Natural killer cell (primary cell): ENCODE measurements at regions of chr19 and their contacts with region 1.

Region 1: DNA sequence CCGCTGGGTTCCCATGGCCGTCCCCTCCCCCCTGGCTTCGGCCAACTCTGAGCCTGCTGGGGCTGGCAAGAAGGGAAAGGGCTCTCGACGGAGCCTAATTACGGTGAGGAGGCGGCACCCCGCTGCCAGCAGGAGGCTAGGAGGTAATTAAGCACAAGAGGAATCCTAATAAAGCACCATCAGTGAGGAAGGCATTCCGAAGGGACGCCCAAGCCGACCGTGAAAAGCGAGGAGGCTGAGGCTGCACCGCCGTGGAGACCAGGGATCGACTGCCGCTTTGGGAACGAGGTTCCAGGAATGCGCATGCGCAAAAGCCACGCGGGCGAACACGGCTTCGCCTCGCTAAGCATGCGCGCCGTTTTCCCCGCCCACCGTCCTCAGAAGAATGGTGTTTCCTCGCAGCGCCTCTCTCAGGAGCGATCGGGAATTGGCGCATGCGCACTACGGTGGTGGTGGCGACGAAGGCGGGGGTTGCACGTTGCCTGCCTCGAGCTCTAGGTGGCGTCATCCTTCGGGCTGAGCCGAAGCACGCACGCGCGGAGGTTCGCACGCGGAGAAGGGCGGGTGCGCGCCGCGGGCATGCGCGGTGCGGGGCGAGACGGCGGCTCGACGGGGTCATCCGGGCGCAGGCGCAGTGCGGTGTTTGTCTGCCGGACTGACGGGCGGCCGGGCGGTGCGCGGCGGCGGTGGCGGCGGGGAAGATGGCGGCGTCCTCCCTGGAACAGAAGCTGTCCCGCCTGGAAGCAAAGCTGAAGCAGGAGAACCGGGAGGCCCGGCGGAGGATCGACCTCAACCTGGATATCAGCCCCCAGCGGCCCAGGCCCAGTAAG is at the start of gene MAP2K7:
- DNase-seq: peak; percentile 100
- ATAC-seq: peak; percentile 71 to 87 (median 72)
- H3K4me3 ChIP-seq: peak within 1 kb of the TSS; percentile 62
- H3K4me3 Mint-ChIP-seq: peak within 1 kb of the TSS; percentile 93
- H3K27ac ChIP-seq: peak within 1 kb of the TSS; percentile 88
- H3K27ac Mint-ChIP-seq: peak within 1 kb of the TSS; percentile 95 to 99
- H3K4me1 ChIP-seq: peaks cover 32% of the 10 kb centered on the region
- H3K4me1 Mint-ChIP-seq: peaks cover 20 to 47% of the 10 kb centered on the region in 2 donors
- H3K27me3 ChIP-seq: no peaks in the 10 kb centered on the region
- H3K27me3 Mint-ChIP-seq: peaks cover 0 to 3% of the 10 kb centered on the region in 2 donors
- CTCF ChIP-seq: peak; percentile 57
- total RNA-seq, gene MAP2K7: 131 to 218 (median 159) TPM

Region 2: GRCh38 chr19:7919610-7920518 is 16.4 kb after region 1 on chr19 and contains the start of gene SNAPC2:
- intact Hi-C with region 1: loop called (anchors 1 kb)
- DNase-seq: peak; percentile 97 to 98
- ATAC-seq: peak; percentile 60 to 79 (median 62)
- H3K4me3 ChIP-seq: peak within 1 kb of the TSS; percentile 55
- H3K4me3 Mint-ChIP-seq: peak within 1 kb of the TSS; percentile 90
- H3K27ac ChIP-seq: peak within 1 kb of the TSS; percentile 72
- H3K27ac Mint-ChIP-seq: peak within 1 kb of the TSS; percentile 82 to 96
- H3K4me1 ChIP-seq: peaks cover 59% of the 10 kb centered on the region
- H3K4me1 Mint-ChIP-seq: peaks cover 21 to 37% of the 10 kb centered on the region in 2 donors
- H3K27me3 ChIP-seq: peaks cover 26% of the 10 kb centered on the region
- H3K27me3 Mint-ChIP-seq: peaks cover 0 to 22% of the 10 kb centered on the region in 2 donors
- CTCF ChIP-seq: no peak
- total RNA-seq, gene SNAPC2: 22.1 to 32.4 (median 27.1) TPM

Region 3: DNA sequence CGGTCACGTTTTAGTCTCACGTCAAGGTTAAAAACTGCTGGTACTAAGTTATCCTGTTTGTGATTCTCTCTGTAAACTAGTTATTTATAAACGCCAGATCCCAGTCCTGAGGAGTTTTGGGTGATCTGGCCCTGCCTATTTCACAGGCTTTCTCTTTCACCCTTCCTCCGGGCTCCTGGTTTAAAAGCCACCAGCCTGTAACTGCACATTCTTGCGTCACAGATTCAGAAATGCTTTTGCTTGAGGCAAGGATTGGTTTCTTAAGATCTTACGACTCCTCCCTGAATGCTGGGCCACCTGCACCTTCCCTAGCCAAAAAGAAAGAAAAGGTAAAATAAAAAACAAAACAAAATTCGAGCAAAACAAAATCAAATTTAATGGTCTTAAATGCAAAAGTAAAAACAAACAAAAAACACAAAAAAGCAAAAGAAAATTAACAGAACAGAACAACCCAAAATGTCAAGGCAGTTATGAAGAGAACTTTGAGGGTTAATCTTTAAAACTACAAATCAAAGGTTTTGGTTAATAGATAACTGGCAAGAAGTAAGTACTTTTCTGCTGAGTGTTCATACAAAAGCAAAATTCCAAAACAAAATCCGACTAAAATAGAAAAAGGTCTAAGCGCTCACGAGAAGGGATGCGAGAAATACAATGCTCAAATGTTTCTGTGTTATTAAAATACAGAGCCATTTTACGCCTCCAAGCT is 58.6 kb after region 1 on chr19:
- intact Hi-C with region 1: no loop called
- DNase-seq: no peak
- ATAC-seq: no peak
- H3K4me3 ChIP-seq: no peak overlapping the region
- H3K4me3 Mint-ChIP-seq: no peak overlapping the region
- H3K27ac ChIP-seq: no peak overlapping the region
- H3K27ac Mint-ChIP-seq: peak overlapping the region in 1 of 2 donors; percentile 38
- H3K4me1 ChIP-seq: no peaks in the 10 kb centered on the region
- H3K4me1 Mint-ChIP-seq: no peaks in the 10 kb centered on the region
- H3K27me3 ChIP-seq: no peaks in the 10 kb centered on the region
- H3K27me3 Mint-ChIP-seq: no peaks in the 10 kb centered on the region
- CTCF ChIP-seq: no peak